H1 (cell line): ENCODE measurements at regions of chr6 and their contacts with region 1.

Region 1: GRCh38 chr6:129575378-129576118 is 134.4 kb downstream of the ARHGAP18 start:
- DNase-seq: no peak
- H3K4me3 ChIP-seq: no peak overlapping the region
- H3K27ac ChIP-seq: no peak overlapping the region
- H3K4me1 ChIP-seq: no peaks in the 10 kb centered on the region
- H3K27me3 ChIP-seq: no peaks in the 10 kb centered on the region
- CTCF ChIP-seq: peak in 2 of 3 experiments; percentile 58 to 67; a peak in 3 of 4 replicates
- EP300 ChIP-seq: no peak
- POLR2A ChIP-seq: no peak
- RAD21 ChIP-seq: peak; percentile 83 to 90

Region 2: GRCh38 chr6:129590408-129591022 is 15.0 kb after region 1 on chr6:
- CTCF ChIA-PET with region 1: interaction called, 11 read pairs
- POLR2A ChIA-PET with region 1: no interaction called
- DNase-seq: no peak
- H3K4me3 ChIP-seq: no peak overlapping the region
- H3K27ac ChIP-seq: no peak overlapping the region
- H3K4me1 ChIP-seq: no peaks in the 10 kb centered on the region
- H3K27me3 ChIP-seq: no peaks in the 10 kb centered on the region
- CTCF ChIP-seq: no peak
- EP300 ChIP-seq: no peak
- POLR2A ChIP-seq: no peak
- RAD21 ChIP-seq: no peak

Region 3: DNA sequence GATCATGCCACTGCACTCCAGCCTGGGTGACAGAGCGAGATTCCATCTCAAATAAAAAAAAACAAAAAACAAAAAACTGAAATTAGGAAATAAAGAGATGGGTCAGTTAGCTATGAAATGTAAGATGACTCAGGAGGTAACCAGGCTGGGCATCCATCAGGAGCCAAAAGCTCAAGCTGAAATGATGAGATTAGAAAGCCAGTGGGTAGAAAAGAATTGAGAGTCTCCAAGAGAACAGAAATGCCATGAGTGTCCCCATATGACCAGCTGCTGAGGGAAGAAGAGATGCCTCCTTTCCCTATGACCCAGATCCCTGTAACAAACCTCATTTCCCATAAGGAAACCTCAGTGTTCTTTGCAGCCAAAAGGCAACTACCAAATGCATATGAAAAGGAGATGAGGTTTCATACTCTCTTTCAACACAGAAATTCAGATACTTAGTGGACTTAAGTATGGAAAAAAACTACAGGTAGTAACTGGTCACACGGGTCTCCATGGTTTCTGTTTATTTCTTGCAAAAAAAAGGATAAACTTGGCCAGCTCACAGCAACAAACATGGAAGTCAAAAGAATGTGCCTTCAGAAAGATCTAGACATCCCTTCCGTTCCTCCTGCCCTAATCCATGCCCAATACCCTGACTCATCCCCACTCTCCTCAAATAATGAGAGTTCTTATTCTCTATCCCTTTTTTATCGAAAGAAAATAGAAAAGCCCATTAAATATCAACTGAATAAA is 126.3 kb after region 1 on chr6:
- CTCF ChIA-PET with region 1: no interaction called
- POLR2A ChIA-PET with region 1: no interaction called
- DNase-seq: no peak
- H3K4me3 ChIP-seq: no peak overlapping the region
- H3K27ac ChIP-seq: no peak overlapping the region
- H3K4me1 ChIP-seq: peaks cover 0 to 5% (median under 1%) of the 10 kb centered on the region in 4 experiments; a peak in 1 of 7 replicates
- H3K27me3 ChIP-seq: no peaks in the 10 kb centered on the region
- CTCF ChIP-seq: no peak
- EP300 ChIP-seq: no peak
- POLR2A ChIP-seq: no peak
- RAD21 ChIP-seq: no peak